Activated T-helper 2 cell treated with anti-CD3 and anti-CD28 coated beads, Interferon-gamma antibody, Interleukin-2, Interleukin-4, amounts not matched to agents 10 μg/mL and 5 μg/mL and 100 μg/mL, durations not matched to agents 14 hours and 24 hours and 36 hours (primary cell): ENCODE measurements at regions of chr2 and their contacts with region 1.

Region 1: GRCh38 chr2:25991965-25992364 is 9.7 kb upstream of the KIF3C start:
- DNase-seq: no peak
- H3K4me3 Mint-ChIP-seq: no peak overlapping the region
- H3K27ac Mint-ChIP-seq: no peak overlapping the region
- H3K4me1 Mint-ChIP-seq: peaks cover 13% of the 10 kb centered on the region
- H3K27me3 Mint-ChIP-seq: peaks cover 7% of the 10 kb centered on the region

Region 2: DNA sequence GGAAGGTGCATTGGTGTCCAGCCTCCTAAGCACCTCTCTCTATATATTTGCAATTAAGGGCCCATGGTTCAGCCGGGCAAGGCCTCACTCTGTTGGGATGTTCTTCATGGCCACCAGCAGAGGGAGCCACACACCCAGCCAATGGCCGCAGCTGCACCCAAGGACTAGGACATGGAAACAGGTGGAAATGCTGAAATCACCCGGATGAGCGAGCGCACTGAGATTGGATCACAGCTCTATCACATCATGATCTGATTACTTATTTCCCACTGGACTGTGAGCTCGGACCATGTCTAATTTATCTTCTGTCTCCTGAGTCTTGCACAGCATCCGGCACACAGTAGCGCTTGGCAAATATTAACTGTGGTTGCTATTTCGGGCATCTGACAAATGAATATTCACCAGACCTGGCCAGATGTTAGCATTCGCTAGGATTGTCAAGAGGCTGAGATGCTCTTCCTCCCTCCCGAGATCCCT is 40.9 kb before region 1 on chr2:
- intact Hi-C with region 1: loop called (anchors 2 kb)
- DNase-seq: peak; percentile 59
- H3K4me3 Mint-ChIP-seq: no peak overlapping the region
- H3K27ac Mint-ChIP-seq: no peak overlapping the region
- H3K4me1 Mint-ChIP-seq: no peaks in the 10 kb centered on the region
- H3K27me3 Mint-ChIP-seq: no peaks in the 10 kb centered on the region

Region 3: DNA sequence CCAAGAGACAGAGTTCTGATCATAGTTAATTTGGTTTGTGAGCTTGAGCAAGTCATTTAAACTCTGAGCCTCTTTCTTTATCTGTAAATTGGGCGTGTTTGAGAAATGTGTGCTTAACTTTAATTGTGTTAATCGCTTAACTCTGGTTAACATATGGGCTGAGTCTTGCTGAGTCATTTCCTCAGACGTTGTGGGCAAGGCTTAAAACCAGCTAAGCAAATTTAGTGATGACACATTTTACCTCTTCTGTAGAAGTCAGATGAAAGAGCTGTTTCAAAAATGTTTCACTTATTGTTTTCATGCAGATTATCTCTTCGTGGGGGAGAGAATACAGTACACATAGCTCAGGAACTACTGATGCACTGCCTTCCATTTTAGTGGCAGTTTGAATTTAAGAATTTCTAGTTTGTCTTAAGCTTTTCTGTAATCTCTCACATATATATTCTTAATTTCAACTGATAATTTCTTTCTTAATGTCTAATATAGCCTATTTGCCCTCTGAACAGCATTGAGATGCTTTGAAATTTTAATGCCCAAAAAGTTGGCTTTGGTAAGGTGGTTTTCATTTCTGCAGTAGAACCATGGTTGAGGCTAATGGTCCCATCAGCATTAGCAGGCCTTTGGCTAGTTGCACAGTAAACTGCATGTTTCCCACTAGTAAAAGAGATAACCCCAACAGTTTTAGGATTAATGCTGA is 76.8 kb after region 1 on chr2:
- intact Hi-C with region 1: loop called (anchors 2 kb)
- DNase-seq: peak; percentile 53
- H3K4me3 Mint-ChIP-seq: peak overlapping the region; percentile 27
- H3K27ac Mint-ChIP-seq: peak overlapping the region; percentile 93
- H3K4me1 Mint-ChIP-seq: peaks cover 53% of the 10 kb centered on the region
- H3K27me3 Mint-ChIP-seq: no peaks in the 10 kb centered on the region

Region 4: DNA sequence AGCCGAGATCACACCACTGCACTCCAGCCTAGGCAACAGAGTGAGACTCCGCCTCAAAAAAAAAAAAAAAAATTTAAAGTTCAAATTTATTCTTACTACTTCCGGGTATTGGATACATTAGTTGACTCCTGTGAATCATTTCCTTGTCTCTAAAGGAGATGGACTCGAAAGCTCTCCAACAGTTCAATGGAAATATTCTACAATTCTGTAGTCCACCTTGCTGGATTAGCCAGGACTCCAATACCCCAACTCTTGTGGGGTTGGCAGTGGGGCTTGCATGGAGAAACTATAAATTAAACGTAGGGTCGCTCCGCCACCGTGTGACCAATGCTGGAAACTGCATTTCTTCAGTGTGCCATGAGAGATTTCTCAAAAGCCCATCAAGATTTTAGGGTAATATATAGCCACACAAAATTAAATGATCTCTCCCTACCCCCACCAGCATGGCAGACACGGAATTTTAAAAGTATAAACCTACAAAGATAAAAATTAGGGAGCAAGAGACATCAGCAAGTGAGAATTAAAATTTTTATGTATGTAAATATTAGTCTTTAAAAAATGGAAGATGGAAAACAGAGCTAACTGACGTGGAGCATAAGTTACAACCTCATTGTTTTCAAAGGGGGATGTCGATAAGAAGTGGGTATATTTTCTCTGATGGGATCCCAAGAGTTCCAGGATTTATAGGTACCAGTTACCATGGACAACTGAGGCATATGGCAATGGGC is 153.2 kb after region 1 on chr2:
- intact Hi-C with region 1: loop called (anchors 1 kb)
- DNase-seq: peak; percentile 44
- H3K4me3 Mint-ChIP-seq: no peak overlapping the region
- H3K27ac Mint-ChIP-seq: no peak overlapping the region
- H3K4me1 Mint-ChIP-seq: peaks cover 3% of the 10 kb centered on the region
- H3K27me3 Mint-ChIP-seq: peaks cover 11% of the 10 kb centered on the region